ENCODE measurements at regions of chr13 and their contacts with region 1.

Region 1: DNA sequence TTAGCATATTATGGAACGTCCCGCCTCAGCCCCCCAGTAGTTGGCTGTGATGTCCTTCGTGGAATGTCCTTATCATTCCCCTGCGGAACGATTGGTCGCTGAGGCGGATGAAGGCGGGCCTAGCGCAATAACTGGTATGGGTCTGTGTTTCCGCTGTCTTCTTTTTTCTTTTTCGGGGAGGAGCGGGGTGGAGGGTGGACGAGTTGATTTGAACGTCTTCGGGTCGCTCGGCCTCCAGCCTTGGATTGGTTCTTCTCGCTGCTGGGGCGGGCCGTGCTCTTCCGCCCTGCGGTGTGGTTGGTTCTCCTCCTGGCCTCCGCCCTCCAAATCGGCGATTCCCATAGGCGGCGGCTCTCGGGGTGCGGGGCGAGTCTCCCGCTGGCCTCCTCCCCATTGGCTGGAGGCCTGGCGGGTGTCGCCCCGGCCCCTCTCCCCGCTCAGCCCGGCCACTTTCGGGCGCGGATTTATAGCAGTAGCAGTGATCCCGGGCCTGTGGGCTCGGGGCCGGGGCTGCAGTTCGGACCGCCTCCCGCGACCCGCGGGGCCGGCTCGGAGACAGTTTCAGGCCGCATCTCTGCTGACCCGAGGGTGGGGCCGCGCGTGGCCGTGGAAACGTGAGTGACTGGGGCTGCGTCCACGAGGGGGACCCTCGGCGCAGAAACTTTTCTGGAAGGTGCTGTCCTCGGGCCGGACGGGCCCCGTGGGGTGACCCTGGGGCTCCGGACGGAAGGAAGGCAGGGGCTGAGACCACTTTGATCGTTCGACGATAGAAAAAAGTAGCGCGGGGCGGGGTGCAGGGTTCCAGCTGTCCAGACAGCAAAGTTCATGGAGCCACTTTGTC is 2.1 kb downstream of the ING1 start:
- H3K4me3 ChIP-seq: peak overlapping the region; percentile 85
- H3K27ac ChIP-seq: peak overlapping the region; percentile 68; the same call in 1 of the 2 replicates
- H3K4me1 ChIP-seq: peaks cover 2% of the 10 kb centered on the region; the same call in 1 of the 2 replicates
- CTCF ChIP-seq: no peak

Region 2: DNA sequence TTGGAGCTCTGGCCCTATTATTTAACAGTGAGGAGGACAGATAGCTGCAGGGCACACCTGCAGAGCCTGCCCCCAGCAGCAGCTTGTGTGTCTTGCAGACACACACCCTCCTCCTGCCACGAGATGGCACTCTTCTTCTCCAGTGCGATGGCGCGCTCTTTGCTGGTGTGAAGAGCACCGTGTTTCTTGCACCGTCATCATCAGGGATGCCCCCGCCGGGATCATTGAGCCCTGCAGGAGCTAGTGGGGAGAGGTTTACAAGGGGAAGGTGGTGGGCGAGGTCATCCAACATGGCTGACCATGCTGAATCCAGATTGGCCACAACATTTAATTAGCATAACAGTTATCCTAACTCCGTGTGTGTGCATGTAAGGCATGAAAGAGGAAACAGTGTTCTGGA is 259.7 kb before region 1 on chr13:
- CTCF ChIA-PET with region 1: interaction called, 3 read pairs
- POLR2A ChIA-PET with region 1: interaction called, 11 read pairs
- H3K4me3 ChIP-seq: no peak overlapping the region
- H3K27ac ChIP-seq: no peak overlapping the region
- H3K4me1 ChIP-seq: no peaks in the 10 kb centered on the region
- CTCF ChIP-seq: no peak; the same call in 1 of the 2 replicates

Region 3: GRCh38 chr13:110615322-110616102 is 100.1 kb before region 1 on chr13 and contains the start of gene NAXD:
- CTCF ChIA-PET with region 1: no interaction called
- POLR2A ChIA-PET with region 1: interaction called, 19 read pairs
- H3K4me3 ChIP-seq: peak within 1 kb of the TSS; percentile 94
- H3K27ac ChIP-seq: peak within 1 kb of the TSS; percentile 69
- H3K4me1 ChIP-seq: no peaks in the 10 kb centered on the region
- CTCF ChIP-seq: no peak

Region 4: DNA sequence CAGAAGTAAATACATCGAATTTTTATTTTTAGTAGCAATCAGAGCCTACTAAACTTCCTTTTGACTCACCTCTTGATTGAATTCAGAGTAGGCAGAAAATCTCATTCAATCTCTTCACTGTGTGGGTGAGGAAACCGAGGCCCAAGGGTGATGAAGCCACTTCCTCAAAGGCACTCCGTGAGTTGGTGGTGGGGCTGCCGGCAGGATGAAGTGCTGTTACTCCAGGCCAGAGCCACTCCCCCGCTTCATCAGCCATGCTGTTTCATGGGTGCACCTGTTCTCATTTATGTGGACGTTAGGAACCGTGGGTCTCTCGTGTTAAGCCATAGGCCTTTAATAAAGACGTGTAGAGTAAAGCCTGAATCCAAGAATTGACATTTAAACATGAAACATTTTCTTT is 11.1 kb after region 1 on chr13:
- CTCF ChIA-PET with region 1: interaction called, 4 read pairs
- POLR2A ChIA-PET with region 1: interaction called, 10 read pairs
- H3K4me3 ChIP-seq: no peak overlapping the region
- H3K27ac ChIP-seq: no peak overlapping the region
- H3K4me1 ChIP-seq: no peaks in the 10 kb centered on the region
- CTCF ChIP-seq: no peak

Region 5: DNA sequence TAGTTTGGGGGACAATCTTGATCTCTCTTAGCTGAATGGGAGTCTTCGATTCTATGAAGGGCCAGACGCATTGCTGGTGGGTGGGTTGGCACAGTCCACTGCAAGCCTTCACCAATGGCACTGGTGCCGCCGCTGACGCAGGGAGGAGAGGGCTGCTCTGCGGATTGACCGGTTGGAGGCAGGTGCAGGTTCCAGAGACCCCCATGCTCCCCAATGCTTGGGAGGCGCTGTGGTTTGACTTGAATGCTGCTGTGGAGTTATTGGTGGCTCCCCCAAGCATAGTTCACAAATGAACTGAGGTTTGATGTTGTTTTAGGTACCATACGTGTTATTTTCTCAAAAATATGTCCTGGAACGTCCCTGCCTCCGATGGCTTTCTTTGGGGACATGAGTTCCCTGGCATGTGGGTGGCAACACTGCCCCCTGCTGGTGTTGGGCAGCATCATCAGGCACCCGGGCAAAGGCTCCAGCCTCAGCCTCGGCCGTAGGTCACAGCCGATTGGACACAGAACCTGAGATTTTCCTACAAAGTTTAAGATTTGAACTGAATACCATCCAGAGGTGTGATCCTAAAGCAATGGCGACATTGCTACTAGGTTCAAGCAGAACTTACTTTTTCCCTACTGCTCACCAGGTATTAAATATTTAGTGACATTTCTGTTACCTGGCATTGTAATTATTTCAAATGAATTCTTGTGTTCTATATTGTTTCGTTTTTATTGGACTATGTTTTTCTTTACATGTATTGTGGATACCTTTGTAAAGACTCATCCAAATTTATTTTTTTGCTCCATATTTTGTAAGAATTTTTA is 103.8 kb after region 1 on chr13:
- CTCF ChIA-PET with region 1: interaction called, 5 read pairs
- POLR2A ChIA-PET with region 1: interaction called, 13 read pairs
- H3K4me3 ChIP-seq: no peak overlapping the region
- H3K27ac ChIP-seq: no peak overlapping the region
- H3K4me1 ChIP-seq: no peaks in the 10 kb centered on the region
- CTCF ChIP-seq: no peak

Region 6: DNA sequence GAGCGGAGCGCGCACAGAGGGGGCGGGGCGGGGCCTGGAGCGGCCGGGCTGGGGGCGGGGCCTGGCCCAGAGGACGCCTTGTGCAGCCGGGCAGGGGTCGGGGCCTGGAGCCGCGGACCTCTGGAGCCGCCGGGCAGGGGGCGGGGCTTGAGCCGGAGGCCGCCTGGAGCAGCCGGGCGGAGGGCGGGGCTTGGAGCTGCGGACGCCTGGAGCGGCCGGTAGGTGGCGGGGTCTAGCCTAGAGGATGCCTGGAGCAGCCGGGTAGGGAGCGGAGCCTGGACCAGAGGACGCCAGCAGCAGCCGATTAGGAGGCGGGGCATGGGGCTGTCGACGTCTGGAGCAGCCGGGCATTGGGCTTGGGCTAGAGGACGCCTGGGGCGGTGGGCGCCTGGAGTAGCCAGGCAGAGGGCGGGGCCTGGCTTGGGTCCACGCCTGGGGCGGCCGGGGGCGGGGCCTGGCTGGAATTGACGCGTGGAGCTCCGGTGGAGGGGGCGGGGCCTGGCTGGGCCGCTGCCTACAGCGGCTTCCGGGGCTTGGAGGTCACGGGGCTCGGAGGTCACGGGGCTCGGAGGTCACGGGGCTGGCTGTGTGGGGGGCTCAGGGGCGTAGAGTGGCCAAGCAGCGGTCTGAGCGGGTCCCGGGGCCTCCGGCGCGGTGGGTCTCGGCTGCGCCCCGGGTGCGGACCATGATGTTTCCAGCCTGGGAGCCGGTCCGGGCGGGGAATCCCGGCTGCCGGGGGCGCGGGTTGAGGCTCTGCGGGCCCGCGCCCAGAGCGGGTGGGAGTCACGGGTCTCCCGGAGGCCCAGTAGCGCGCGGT is 199.7 kb after region 1 on chr13 and contains the start of gene ANKRD10:
- CTCF ChIA-PET with region 1: no interaction called
- POLR2A ChIA-PET with region 1: interaction called, 23 read pairs
- H3K4me3 ChIP-seq: peak within 1 kb of the TSS; percentile 99
- H3K27ac ChIP-seq: peak within 1 kb of the TSS; percentile 98
- H3K4me1 ChIP-seq: peaks cover 10% of the 10 kb centered on the region
- CTCF ChIP-seq: no peak

Measured in HEK293 (cell line).